Posterior vena cava (tissue), 2 donors: ENCODE measurements at regions of chr9 and their contacts with region 1.

Region 1: GRCh38 chr9:121286973-121287741 is 19.2 kb downstream of the GSN start:
- DNase-seq: peak; percentile 94

Region 2: DNA sequence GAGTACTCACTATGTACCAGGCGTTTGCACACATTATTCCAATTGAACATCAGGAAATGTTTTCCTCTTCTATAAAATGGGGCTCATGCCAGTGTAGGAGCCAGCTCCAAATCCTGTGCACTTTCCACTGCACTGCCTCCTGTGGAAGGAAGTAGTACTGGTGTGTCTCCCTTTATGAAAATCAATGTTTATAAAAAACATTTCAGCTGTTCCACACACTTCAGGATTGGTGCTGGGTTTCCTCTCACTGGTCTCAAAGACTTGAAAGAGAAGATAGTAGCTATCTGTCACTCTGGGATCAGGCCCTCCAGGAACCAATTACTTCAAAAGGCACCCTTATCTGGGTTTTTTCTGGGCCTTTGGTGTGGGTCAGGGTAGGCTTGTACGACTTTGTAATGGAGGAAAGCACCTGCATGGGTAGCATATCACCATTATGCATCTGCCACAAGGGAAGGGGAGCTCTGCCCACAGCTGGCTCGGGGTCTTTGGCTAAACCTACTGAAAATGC is 118.0 kb before region 1 on chr9:
- intact Hi-C with region 1: no loop called
- DNase-seq: no peak

Region 3: DNA sequence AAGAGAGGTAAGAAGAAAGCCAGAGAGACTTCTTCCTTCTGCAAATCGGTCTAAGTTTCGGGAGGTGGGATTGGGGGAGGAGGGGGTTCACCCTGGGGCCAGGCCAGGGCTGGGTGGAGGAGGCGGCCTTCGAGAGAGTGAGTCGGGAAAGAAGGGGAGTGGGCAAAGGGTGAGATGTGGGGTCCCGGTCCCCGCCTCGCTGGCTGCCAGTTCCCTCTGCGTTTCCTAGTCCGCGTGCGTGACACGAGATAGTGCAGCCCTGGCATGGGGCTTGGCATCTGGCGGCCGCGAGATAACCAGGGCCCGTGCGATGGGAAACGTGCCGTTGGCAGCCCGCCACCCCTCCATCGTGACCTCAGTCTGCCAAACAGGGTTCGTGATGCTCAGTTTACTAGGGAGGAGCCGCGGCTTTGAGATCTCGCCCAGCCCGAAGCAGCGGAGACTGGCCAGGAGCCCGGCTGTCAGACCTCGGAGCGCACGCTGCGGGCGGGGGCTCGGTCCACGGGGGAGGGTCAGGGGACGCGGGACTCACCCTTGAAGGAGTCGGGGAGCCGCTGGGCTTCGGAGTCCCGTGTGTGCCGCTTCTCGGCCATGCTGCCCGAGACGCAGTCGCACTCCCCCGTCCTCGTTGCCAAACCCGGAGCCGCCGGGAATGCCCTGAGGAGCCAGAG is 82.6 kb after region 1 on chr9 and contains the start of gene STOM:
- intact Hi-C with region 1: loop called in 1 of 2 experiments (anchors 10 kb)
- DNase-seq: peak; percentile 97
- total RNA-seq, gene STOM: 352 to 371 TPM